OCI-LY7 (cell line): ENCODE measurements at regions of chr17 and their contacts with region 1.

Region 1: DNA sequence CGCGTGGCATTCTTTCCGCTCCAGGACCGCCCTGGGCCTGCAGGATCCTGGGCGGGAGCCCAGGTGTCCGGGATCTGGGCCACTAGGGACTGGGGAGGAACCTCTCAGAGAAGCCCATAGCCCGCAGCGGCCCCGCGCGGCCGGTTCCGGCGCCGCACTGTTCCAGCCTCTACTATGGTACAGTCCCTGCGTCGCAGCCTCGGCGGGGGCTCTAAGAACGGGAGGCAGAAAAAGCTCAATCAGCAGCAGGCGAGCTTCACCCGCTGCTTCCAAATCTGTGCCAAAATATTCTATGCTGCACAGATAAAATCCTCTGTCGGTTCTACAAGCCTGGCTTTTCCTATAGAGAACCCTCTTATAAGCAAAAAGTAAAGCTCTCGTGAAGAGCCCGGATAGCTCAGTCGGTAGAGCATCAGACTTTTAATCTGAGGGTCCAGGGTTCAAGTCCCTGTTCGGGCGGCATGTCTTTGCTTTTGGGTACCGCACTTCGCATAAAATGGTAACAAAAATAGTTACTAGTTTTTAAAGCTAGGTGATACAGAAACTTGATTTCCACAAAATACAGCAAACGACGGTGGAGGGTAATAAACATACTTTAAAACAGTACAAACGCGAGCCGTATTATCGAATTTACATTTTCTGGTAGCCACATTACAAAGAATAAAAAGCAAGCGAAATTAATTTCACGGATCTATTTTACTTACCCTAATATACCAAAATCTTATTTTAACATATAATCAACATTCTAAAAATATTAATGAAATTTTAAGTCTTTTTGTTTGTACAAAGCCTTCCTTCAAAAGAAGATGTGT is 661 bp upstream of the ALOXE3 start:
- DNase-seq: peak; percentile 89
- H3K4me3 ChIP-seq: peak overlapping the region; percentile 79
- H3K27ac ChIP-seq: peak overlapping the region; percentile 79
- H3K4me1 ChIP-seq: peaks cover 40% of the 10 kb centered on the region
- CTCF ChIP-seq: peak; percentile 97

Region 2: GRCh38 chr17:7887482-7888183 is 231.3 kb before region 1 on chr17:
- CTCF ChIA-PET with region 1: no interaction called
- POLR2A ChIA-PET with region 1: interaction called, 5 read pairs
- intact Hi-C with region 1: loop called (anchors 5 kb)
- DNase-seq: peak; percentile 90
- H3K4me3 ChIP-seq: peak overlapping the region; percentile 95
- H3K27ac ChIP-seq: peak overlapping the region; percentile 90
- H3K4me1 ChIP-seq: peaks cover 28% of the 10 kb centered on the region
- CTCF ChIP-seq: peak; percentile 18; the same call in 1 of the 2 replicates

Region 3: DNA sequence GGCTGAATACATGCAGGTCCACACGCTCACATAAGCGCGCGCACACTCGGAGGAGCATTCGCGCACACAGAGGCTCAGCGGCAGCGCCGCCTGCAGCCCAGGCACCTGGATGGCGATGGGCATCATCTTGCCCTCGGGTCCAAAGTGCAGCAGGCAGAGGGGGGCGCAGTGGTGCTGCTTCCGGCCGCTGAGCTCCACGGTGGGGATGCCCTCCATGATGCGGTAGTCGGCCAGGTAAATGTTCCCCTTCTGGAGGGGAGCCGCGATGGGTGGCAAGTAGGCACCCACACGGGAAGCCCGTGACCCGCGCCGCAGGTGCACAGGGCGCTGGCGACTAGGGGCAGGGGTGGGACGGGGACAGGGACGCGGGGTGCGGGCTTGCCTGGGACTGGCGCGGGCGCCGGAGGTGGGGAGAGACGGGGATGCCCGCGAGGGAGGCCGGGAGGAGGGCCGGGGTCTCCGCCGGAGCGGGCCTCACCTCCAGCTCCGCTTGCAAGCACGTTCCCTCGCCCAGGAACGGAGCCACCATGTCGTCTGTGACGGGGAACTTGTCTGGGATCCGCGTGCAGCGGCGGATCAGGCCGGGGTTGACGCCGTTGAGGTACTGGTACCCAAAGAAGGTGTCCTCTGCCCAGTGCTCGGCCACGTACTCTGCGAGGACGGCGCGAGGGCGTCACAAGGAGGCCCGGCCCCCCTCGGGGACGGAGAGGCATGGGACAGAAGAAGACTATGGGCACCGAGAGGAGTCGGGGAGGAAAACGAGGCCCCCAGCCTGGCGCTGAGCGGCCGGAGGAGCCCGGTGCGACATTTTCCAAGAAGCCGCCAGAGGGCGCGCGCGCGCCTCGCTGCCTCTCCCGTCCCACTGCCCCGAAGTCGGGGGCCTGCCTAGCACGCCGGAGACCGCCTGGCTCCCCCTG is 39.4 kb before region 1 on chr17:
- CTCF ChIA-PET with region 1: interaction called, 6 read pairs
- POLR2A ChIA-PET with region 1: no interaction called
- intact Hi-C with region 1: loop called (anchors 1 kb)
- DNase-seq: peak; percentile 90
- H3K4me3 ChIP-seq: peak overlapping the region; percentile 74
- H3K27ac ChIP-seq: peak overlapping the region; percentile 67
- H3K4me1 ChIP-seq: peaks cover 6% of the 10 kb centered on the region
- CTCF ChIP-seq: peak; percentile 84

Region 4: GRCh38 chr17:8131844-8132441 is 13.0 kb after region 1 on chr17:
- CTCF ChIA-PET with region 1: no interaction called
- POLR2A ChIA-PET with region 1: no interaction called
- intact Hi-C with region 1: no loop called
- DNase-seq: no peak
- H3K4me3 ChIP-seq: no peak overlapping the region
- H3K27ac ChIP-seq: no peak overlapping the region
- H3K4me1 ChIP-seq: peaks cover 4% of the 10 kb centered on the region
- CTCF ChIP-seq: no peak

Region 5: DNA sequence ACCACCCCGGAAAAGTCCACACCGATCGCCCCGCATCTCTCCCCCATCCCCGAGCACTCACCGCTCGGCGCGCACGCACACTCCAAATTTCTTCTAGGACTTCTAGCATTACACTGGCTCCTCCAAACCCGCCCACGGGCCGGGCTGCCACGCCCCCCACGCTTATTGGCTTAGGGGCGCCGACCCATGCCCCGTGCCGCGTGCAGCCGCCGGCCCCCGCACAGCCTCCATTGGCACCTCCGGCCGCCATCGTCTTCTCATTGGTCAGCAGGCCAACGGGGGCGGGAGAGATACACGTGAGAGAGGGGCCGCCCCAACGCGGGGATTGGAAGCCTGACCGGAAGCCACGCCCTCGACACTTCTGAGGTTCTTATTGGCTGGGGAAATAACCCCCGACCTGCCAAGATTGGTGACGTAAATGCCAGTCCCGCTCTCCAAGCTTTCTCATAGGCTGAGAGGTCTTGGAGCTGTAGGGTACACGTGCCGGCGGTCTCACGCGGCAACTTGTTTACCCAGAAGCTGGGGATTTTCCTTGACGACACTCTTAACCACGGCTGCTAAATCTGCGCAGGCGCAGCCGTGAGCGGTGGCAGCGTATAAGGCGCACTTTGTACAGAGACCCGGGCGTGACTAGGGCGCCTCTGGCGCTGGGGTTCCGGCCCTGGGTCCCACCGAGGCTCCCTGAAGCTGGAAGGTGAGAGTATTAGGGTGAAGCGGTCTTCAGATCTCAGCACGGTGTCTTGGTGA is 37.4 kb after region 1 on chr17:
- CTCF ChIA-PET with region 1: interaction called, 3 read pairs
- POLR2A ChIA-PET with region 1: no interaction called
- intact Hi-C with region 1: loop called (anchors 1 kb)
- DNase-seq: peak; percentile 100
- H3K4me3 ChIP-seq: peak overlapping the region; percentile 75
- H3K27ac ChIP-seq: peak overlapping the region; percentile 80
- H3K4me1 ChIP-seq: peaks cover 60% of the 10 kb centered on the region
- CTCF ChIP-seq: peak; percentile 43; the same call in 1 of the 2 replicates

Region 6: DNA sequence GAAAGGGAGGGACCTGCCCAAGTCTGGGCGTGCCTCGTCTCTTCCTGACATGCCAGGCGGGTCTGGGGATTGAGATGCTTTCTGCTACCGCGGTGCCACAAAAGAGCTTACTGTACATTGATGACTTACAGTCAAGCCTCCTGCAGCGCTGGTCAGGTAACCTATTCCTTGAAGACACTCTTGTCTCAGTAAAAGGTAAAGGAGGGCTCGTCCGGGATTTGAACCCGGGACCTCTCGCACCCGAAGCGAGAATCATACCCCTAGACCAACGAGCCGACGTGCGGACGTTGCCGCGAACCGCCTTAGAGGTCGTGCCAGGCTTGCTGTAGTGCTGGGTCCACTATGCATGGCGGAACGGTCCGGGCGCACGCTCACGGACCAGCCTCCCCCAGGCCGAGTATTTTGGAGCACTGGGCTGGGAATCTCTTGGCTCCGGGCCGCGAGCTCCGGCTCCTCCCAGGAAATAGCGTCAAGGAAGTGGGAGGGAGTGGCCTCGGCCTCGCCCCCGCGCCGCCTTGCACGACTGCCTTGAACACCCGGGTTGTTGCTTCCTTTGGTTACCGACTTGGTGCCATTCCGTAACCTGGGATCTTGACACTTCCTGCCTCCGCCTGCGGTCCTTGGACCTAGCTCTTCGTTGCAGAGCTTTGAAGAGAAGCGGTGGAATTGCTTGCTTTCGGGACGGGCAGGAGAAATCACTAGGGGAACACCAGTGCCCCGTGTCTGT is 103.8 kb after region 1 on chr17:
- CTCF ChIA-PET with region 1: interaction called, 3 read pairs
- POLR2A ChIA-PET with region 1: no interaction called
- intact Hi-C with region 1: loop called (anchors 1 kb)
- DNase-seq: peak; percentile 89
- H3K4me3 ChIP-seq: peak overlapping the region; percentile 80
- H3K27ac ChIP-seq: peak overlapping the region; percentile 88
- H3K4me1 ChIP-seq: peaks cover 21% of the 10 kb centered on the region
- CTCF ChIP-seq: no peak

Region 7: DNA sequence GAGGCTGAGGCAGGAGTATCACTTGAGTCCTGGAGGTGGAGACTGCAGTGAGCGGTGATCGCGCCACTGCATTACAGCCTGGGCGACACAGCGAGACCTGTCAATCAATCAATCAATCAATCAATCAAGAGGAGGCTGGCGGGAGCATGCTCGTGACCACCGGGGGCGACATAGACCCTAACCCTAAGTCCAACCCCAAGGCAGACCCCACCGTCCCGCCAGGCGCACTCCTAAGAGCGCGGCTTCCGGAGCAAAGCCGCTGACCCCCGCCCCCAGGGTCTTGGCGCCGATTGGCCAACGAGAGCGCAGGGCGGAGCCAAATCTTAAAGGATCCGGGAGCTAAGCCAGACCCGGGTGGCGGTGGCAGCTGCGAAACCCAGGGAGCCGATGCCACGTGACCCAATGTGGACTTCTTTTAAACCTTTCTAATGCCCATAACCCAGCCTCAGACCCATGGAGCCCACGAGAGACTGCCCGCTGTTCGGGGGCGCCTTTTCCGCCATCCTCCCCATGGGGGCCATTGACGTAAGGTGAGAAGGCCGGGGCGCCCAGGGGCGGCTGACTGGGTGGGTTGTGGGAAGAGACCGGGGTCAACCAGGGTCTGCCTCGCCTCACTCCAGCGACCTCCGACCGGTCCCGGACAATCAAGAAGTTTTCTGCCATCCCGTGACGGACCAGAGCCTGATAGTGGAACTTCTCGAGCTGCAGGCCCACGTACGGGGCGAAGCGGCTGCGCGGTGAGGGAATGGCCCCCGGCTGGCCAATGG is 169.5 kb after region 1 on chr17 and contains the start of gene RANGRF:
- CTCF ChIA-PET with region 1: no interaction called
- POLR2A ChIA-PET with region 1: no interaction called
- intact Hi-C with region 1: loop called (anchors 5 kb)
- DNase-seq: peak; percentile 90
- H3K4me3 ChIP-seq: peak within 1 kb of the TSS; percentile 83
- H3K27ac ChIP-seq: peak within 1 kb of the TSS; percentile 46
- H3K4me1 ChIP-seq: peaks cover 42% of the 10 kb centered on the region
- CTCF ChIP-seq: peak; percentile 29; the same call in 1 of the 2 replicates
- total RNA-seq, gene RANGRF: 30.6 and 32.2 TPM in 2 replicates